ENCODE measurements at regions of chr3 and their contacts with region 1.

Region 1: GRCh38 chr3:191328962-191329653 is at the start of gene CCDC50:
- DNase-seq: peak; percentile 91 to 92 (median 91)
- ATAC-seq: peak; percentile 72 to 94 (median 90)
- H3K4me3 ChIP-seq: peak within 1 kb of the TSS; percentile 72 to 99 (median 93)
- H3K27ac ChIP-seq: peak within 1 kb of the TSS; percentile 92 to 98 (median 96)
- H3K4me1 ChIP-seq: peaks cover 7 to 50% (median 34%) of the 10 kb centered on the region in 12 donors
- H3K27me3 ChIP-seq: no peaks in the 10 kb centered on the region
- CTCF ChIP-seq: peak in 1 of 12 donors; percentile 19
- POLR2A ChIP-seq: peak in 1 of 2 donors; percentile 59
- total RNA-seq, gene CCDC50: 42.9 to 75.7 (median 57.1) TPM

Region 2: DNA sequence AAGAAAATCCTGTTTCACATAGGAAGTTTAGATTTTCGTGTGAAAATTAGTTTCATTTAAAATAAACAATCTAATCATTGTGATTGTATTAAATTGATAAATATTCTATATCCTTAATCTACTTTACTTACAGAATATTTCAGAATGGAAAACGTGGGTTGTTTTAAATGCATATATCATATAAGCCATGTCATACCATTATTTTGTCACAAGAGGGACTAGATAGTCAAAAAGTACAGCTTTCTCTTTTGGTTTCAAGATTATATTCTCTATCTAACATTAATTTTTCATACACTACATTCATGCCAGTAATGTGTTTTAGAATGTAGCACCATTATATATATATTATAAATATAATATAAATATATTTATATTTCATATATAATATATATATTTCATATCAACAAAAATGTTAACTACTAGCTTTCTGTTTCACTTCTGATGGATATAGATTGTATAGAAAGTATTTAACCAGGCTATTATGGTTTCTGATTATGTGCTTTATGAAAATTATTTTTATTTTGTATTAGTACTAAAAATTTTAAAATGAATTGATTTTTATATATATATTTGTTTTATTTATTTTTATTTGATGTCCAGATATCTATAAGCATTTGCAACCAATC is 84.8 kb before region 1 on chr3:
- intact Hi-C with region 1: loop called in 2 of 10 experiments (anchors 10 kb)
- DNase-seq: no peak
- ATAC-seq: no peak
- H3K4me3 ChIP-seq: no peak overlapping the region
- H3K27ac ChIP-seq: peak overlapping the region in 1 of 12 donors; percentile 30
- H3K4me1 ChIP-seq: peaks cover 0 to 10% (median 0%) of the 10 kb centered on the region in 12 donors
- H3K27me3 ChIP-seq: no peaks in the 10 kb centered on the region
- CTCF ChIP-seq: peak; percentile 30 to 62 (median 48)
- POLR2A ChIP-seq: no peak

Region 3: DNA sequence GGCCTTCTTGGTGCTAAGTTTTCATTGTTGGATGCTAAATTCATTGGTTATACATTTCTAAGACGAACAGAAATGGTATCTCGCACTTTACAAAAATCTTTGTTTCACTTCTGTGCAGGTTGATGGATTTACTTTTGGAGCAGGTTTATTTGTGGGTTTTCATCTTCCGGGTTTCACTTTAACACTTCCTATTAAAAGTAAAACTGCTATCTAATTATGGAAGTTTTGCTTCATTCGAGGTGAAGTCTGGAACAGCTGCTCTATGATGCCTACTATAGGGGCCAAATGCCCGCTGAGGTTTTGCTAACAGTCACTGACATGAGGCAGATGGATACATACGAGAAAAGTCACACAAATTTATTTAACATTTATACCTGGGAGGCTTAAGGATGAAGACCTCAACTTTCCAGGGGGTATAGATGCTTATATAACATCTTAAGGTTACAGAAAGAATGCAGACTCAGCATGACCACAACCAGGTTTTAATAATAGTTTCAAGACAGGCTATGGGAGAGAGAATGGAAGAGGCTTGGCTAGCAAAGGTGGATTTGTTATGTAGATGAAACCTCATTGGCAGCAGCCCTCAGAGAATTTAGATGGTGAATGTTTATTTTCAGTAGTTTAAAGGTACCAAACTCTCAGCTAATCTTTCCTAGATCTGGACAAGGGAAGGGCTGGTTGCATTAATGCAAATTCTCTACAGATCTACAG is 75.9 kb before region 1 on chr3:
- intact Hi-C with region 1: loop called in 4 of 10 experiments (anchors 5 to 10 kb)
- DNase-seq: no peak
- ATAC-seq: no peak
- H3K4me3 ChIP-seq: no peak overlapping the region
- H3K27ac ChIP-seq: no peak overlapping the region
- H3K4me1 ChIP-seq: peaks cover 0 to 4% (median 0%) of the 10 kb centered on the region in 12 donors
- H3K27me3 ChIP-seq: no peaks in the 10 kb centered on the region
- CTCF ChIP-seq: no peak
- POLR2A ChIP-seq: no peak

Region 4: DNA sequence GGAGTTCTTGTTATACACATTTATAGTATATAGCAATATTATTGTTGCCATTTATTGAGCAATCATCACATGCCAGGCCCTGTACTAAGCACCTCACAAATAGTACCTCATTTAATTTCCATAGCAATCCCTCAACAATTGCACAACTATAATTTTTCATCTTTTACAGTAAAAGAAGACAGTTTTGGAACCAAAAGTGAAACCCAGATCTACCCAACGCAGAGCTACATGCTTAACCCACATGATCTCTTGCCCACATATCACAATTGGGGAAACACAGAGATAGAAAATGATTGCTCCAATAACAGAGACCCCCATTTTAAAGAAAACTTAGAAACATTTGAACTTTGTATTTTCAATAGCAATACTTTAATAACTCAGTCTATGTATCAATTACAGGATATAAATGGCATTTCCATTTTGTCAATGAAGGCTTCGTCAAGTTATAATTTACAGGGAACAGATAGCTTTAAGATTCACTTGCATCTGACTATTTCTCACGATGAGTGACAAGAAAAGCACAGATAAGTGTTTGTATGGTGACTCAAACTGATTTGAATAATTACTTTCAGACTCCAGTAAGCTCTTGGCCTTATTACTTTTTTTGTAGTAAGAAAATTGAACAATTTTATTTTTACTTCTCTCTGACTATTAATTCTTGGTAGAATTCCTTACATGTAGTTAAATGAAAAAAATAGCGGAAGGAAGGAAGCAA is 38.6 kb before region 1 on chr3:
- intact Hi-C with region 1: loop called in 1 of 10 experiments (anchors 5 kb)
- DNase-seq: no peak
- ATAC-seq: no peak
- H3K4me3 ChIP-seq: peak overlapping the region in 9 of 12 donors; percentile 1 to 37 (median 28)
- H3K27ac ChIP-seq: peak overlapping the region in 9 of 12 donors; percentile 3 to 83 (median 23)
- H3K4me1 ChIP-seq: peaks cover 0 to 16% (median 0%) of the 10 kb centered on the region in 12 donors
- H3K27me3 ChIP-seq: no peaks in the 10 kb centered on the region
- CTCF ChIP-seq: no peak
- POLR2A ChIP-seq: no peak

Region 5: GRCh38 chr3:191369616-191370010 is 40.5 kb after region 1 on chr3:
- intact Hi-C with region 1: loop called in 1 of 10 experiments (anchors 5 kb)
- DNase-seq: no peak
- ATAC-seq: peak in 1 of 4 donors; percentile 50
- H3K4me3 ChIP-seq: no peak overlapping the region
- H3K27ac ChIP-seq: no peak overlapping the region
- H3K4me1 ChIP-seq: peaks cover 0 to 31% (median 8%) of the 10 kb centered on the region in 12 donors
- H3K27me3 ChIP-seq: no peaks in the 10 kb centered on the region
- CTCF ChIP-seq: no peak
- POLR2A ChIP-seq: no peak

Region 6: DNA sequence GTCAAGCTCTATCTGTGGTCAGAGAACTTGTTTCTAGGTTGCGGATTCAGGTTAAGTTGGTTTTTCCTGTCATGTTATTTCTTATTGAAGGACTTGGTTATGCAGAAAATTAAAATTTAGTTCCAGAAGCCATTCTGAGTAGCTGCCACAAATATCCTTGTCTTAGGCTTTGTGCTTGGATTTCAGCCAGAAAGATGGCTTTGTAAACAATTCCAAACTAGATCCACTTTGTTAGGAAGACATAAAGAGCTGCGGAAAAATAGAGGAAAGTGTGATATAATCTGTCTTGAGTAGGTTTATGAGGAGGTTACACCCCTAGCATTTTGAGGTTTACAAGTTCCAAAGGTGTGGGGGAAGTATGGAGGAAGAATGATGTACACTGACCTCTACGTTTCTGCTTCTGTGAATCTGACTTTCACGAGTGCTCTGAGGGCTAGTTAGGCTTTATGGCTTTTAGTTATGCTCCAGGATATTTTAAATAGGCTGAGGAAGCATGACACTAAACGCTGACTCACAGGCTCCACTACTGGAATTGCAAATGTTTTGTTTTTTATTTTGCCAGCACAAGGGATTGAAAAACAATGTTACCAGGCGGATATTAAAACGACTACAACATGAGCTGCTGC is 47.5 kb after region 1 on chr3:
- intact Hi-C with region 1: loop called in 7 of 10 experiments (anchors 5 to 10 kb)
- DNase-seq: no peak
- ATAC-seq: peak in 3 of 4 donors; percentile 54 to 69 (median 61)
- H3K4me3 ChIP-seq: no peak overlapping the region
- H3K27ac ChIP-seq: peak overlapping the region in 10 of 12 donors; percentile 7 to 69 (median 34)
- H3K4me1 ChIP-seq: peaks cover 4 to 51% (median 37%) of the 10 kb centered on the region in 12 donors
- H3K27me3 ChIP-seq: no peaks in the 10 kb centered on the region
- CTCF ChIP-seq: no peak
- POLR2A ChIP-seq: no peak

Region 7: DNA sequence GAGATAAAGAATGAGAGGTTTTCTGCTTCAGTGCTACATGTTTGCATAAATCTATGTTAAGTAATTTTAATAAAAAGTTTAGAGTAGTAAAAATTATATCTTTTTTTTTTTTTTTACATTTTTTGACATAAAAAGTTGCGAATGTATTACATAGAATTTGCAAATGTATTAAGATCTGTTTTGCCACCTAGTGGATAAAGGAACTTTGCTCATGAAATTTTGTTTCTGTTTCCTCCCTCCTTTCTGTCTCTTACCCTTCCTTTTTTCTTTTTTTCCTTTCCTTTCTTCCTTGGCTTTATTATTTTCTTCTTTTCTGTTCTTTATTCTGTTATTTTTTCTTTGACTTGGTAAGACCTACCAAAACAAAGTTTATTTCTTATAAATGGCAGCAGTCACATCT is 59.7 kb after region 1 on chr3:
- intact Hi-C with region 1: loop called in 2 of 10 experiments (anchors 10 kb)
- DNase-seq: no peak
- ATAC-seq: no peak
- H3K4me3 ChIP-seq: no peak overlapping the region
- H3K27ac ChIP-seq: no peak overlapping the region
- H3K4me1 ChIP-seq: peaks cover 0 to 20% (median 0%) of the 10 kb centered on the region in 12 donors
- H3K27me3 ChIP-seq: no peaks in the 10 kb centered on the region
- CTCF ChIP-seq: peak in 9 of 12 donors; percentile 24 to 50 (median 35)
- POLR2A ChIP-seq: no peak